A549 (cell line): ENCODE measurements at regions of chr19 and their contacts with region 1.

Region 1: GRCh38 chr19:7663706-7664105 is 5.1 kb upstream of the RETN start:
- DNase-seq: no peak
- ATAC-seq: no peak
- H3K4me3 ChIP-seq: no peak overlapping the region
- H3K27ac ChIP-seq: no peak overlapping the region
- H3K4me1 ChIP-seq: no peaks in the 10 kb centered on the region
- CTCF ChIP-seq: no peak
- EP300 ChIP-seq: no peak
- POLR2A ChIP-seq: no peak
- RAD21 ChIP-seq: no peak

Region 2: DNA sequence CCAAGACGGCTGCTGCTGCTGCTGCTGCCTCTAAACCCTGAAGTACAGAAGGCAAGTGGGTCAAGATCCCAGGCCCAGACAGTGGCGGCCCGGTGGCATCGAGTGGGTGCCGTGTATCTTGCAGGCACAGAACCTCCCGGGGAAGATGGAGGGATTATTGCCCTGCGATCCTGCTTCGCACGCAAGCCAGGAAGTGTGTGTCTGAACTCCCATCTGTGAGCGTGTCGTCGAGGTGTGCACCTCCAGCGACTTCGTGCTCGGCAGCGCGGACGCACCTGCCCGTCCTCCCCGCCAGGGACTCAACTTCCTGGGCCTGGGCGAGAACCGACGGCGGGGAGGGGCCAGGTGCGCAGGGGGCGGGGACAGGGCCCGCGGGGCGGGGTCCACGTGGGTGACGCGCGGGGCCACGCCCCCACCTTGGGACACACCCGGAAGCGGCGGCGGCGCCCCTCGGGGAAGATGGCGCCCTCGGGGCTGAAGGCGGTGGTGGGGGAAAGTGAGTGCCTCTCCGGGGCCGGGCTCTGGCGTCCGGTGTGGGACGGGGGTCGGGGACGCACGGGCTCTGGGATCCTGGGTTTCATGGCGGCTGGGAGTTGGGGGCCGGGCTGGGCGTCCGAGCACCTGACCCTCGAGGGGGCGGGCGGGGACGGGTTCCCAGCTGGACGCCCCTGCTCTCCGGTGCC is 26.9 kb before region 1 on chr19 and contains the start of gene STXBP2:
- CTCF ChIA-PET with region 1: no interaction called
- POLR2A ChIA-PET with region 1: no interaction called
- DNase-seq: peak; percentile 75 to 77
- ATAC-seq: peak; percentile 61 to 86
- H3K4me3 ChIP-seq: peak within 1 kb of the TSS; percentile 64
- H3K27ac ChIP-seq: peak within 1 kb of the TSS; percentile 77 to 98
- H3K4me1 ChIP-seq: no peaks in the 10 kb centered on the region
- CTCF ChIP-seq: no peak
- EP300 ChIP-seq: no peak
- POLR2A ChIP-seq: peak; percentile 58
- RAD21 ChIP-seq: no peak
- polyA plus RNA-seq, gene STXBP2: 44.4 and 47.2 TPM in 2 replicates

Region 3: DNA sequence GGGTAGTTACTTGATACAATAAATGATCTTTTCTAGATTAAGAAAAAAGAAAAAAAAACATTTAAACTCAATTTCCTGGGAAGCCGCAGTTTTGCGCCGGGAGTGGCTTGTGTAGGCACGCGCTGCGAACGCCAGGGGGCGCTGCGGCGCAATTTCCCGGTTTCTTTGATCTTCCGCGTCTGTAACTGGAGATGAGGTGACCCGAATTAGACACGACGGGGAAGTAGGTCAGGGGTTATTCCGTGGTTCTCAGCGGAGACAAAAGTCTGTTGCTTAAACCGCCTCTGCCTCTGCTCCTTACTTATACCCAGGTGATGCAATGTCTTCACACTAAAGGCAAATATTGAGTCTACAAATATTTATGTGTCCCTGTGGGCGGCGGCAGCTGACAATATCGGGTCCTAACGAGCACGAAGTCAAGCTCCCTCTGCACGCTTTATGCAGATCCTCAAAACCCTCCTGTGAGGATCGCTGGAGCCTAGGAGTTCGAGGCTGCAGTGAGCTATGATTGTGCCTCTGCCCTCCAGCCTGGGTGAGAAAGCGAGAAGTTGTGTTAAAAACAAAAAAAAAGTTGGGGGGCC is 11.6 kb before region 1 on chr19:
- CTCF ChIA-PET with region 1: interaction called, 16 read pairs
- POLR2A ChIA-PET with region 1: no interaction called
- DNase-seq: peak; percentile 75 to 85
- ATAC-seq: peak; percentile 76 to 84
- H3K4me3 ChIP-seq: peak overlapping the region; percentile 31; the same call in 1 of the 3 replicates
- H3K27ac ChIP-seq: peak overlapping the region; percentile 32 to 76; a peak in 5 of 6 replicates
- H3K4me1 ChIP-seq: no peaks in the 10 kb centered on the region
- CTCF ChIP-seq: peak; percentile 88
- EP300 ChIP-seq: no peak
- POLR2A ChIP-seq: no peak
- RAD21 ChIP-seq: peak; percentile 44 to 59; a peak in 4 of 5 replicates